Activated CD4-positive, alpha-beta T cell treated with anti-CD3 and anti-CD28 coated beads, Interleukin-2, amount 10 ng/mL, durations not matched to agents 24 days and 14 days (primary cell): ENCODE measurements at regions of chr15 and their contacts with region 1.

Region 1: DNA sequence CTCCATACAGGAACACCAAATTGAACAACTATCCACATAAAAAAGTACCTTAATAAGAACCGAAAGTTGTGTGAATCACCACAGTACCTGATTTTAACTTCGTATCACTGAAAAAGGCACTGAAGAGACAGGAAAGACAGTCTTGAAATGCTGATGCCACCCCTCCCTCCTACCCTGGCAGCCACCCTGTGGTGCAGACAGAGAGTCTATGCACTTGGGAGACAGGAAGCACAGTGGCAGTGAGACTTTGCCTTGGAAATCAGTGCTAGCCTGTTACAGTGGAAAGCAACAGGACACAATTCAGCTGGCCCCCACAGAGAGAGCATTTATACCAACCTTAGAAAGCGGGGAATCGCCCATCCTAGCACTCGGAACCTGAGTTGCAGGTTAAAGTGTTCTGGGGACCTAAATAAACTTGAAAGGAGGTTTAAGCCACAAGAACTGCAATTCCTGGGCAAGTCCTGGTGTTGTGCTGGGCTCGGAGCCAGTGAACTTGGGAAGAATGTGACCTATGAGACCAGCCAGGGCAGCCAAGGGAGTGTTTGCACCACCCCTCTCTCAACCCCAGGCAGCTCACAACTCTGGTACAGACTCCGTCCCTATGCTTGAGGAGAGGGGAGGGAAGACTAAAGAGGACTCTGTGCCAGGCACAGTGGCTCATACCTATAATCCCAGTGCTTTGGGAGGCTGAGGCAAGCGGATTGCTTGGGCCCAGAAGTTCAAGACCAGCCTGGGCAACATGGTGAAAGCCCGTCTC is 240.1 kb downstream of the ISL2 start:
- DNase-seq: no peak
- H3K4me3 Mint-ChIP-seq: no peak overlapping the region
- H3K27ac Mint-ChIP-seq: no peak overlapping the region
- H3K4me1 Mint-ChIP-seq: peaks cover 21% of the 10 kb centered on the region
- H3K27me3 Mint-ChIP-seq: no peaks in the 10 kb centered on the region

Region 2: DNA sequence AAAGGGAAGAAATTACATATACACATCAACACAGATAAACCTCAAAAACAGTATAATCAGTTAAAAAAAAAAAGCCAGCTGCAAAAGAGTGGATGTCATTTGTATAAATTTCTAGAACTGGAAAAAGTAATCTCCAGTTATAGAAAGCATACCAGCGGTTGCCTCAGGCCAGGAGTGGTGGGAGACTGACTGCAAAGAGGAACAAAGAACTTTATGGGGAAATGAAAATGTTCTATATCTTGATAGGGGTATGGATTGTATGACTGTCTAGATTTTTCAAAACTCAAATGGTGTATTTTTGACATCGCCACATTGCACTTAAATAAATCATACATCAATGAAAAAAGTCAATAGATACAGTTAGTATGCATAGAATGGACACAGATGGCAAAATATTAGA is 86.8 kb after region 1 on chr15:
- intact Hi-C with region 1: loop called (anchors 10 kb)
- DNase-seq: no peak
- H3K4me3 Mint-ChIP-seq: no peak overlapping the region
- H3K27ac Mint-ChIP-seq: no peak overlapping the region
- H3K4me1 Mint-ChIP-seq: no peaks in the 10 kb centered on the region
- H3K27me3 Mint-ChIP-seq: no peaks in the 10 kb centered on the region